Mammary epithelial cell (primary cell): ENCODE measurements at regions of chr21 and their contacts with region 1.

Region 1: GRCh38 chr21:33229784-33230544 is at the start of gene IFNAR2:
- DNase-seq: peak; percentile 57
- H3K4me3 ChIP-seq: peak within 1 kb of the TSS; percentile 92 to 97 (median 94)
- H3K27ac ChIP-seq: peak within 1 kb of the TSS; percentile 65
- H3K4me1 ChIP-seq: peaks cover 23% of the 10 kb centered on the region
- H3K27me3 ChIP-seq: no peaks in the 10 kb centered on the region
- CTCF ChIP-seq: no peak
- total RNA-seq, gene IFNAR2: 5.7 to 16.7 TPM

Region 2: GRCh38 chr21:33205476-33205875 is 24.5 kb before region 1 on chr21:
- CTCF ChIA-PET with region 1: no interaction called
- dilution Hi-C with region 1: no loop called
- in situ Hi-C with region 1: no loop called
- intact Hi-C with region 1: loop called (anchors 2 kb)
- DNase-seq: no peak
- H3K4me3 ChIP-seq: no peak overlapping the region
- H3K27ac ChIP-seq: no peak overlapping the region
- H3K4me1 ChIP-seq: peaks cover 23% of the 10 kb centered on the region
- H3K27me3 ChIP-seq: no peaks in the 10 kb centered on the region
- CTCF ChIP-seq: no peak

Region 3: DNA sequence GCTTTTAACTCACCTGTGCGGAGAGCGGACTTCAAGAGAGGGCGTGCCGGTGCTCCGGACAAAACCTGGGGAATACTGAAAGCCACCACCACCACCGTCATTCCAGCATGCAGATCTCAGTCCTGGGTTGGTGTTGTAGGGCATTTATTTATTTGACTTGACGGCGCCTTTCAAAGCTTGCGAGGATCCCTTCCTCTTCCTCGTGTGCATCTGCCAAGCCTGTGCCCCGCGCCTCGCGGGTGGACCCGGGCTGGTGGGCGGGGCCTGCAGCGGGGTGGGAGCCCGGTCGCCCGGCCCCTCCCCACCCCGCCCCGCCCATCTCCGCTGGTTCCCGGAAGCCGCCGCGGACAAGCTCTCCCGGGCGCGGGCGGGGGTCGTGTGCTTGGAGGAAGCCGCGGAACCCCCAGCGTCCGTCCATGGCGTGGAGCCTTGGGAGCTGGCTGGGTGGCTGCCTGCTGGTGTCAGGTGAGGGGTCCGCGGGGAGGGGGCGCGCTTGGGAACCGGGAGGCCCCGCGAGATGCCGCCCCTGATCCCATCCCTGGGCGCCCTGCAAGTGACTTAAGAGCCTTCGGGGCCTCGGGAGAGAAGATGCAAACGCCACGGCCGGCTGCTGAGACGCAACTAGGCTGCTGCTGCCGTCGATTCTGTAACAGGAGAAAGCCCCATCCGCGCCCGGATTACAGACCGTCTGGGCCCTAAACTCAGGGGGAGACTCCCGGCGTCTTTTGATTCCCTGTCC is 36.3 kb after region 1 on chr21 and contains the start of gene IL10RB:
- CTCF ChIA-PET with region 1: no interaction called
- dilution Hi-C with region 1: no loop called
- in situ Hi-C with region 1: no loop called
- intact Hi-C with region 1: loop called (anchors 2 kb)
- DNase-seq: peak; percentile 56
- H3K4me3 ChIP-seq: peak within 1 kb of the TSS; percentile 87 to 90 (median 87)
- H3K27ac ChIP-seq: peak within 1 kb of the TSS; percentile 59
- H3K4me1 ChIP-seq: peaks cover 18% of the 10 kb centered on the region
- H3K27me3 ChIP-seq: no peaks in the 10 kb centered on the region
- CTCF ChIP-seq: no peak
- total RNA-seq, gene IL10RB: 14.3 to 18.9 TPM